ENCODE measurements at regions of chr6 and their contacts with region 1.

Region 1: GRCh38 chr6:24991810-24992467 is 56.2 kb upstream of the RIPOR2 start:
- DNase-seq: peak; percentile 52 to 90 (median 71)
- ATAC-seq: peak; percentile 86
- H3K4me3 ChIP-seq: no peak overlapping the region
- H3K4me3 Mint-ChIP-seq: peak overlapping the region; percentile 46
- H3K27ac ChIP-seq: peak overlapping the region; percentile 31 to 66
- H3K27ac Mint-ChIP-seq: peak overlapping the region; percentile 84
- H3K4me1 ChIP-seq: peaks cover 36% of the 10 kb centered on the region
- H3K4me1 Mint-ChIP-seq: peaks cover 83% of the 10 kb centered on the region
- H3K27me3 ChIP-seq: no peaks in the 10 kb centered on the region
- H3K27me3 Mint-ChIP-seq: no peaks in the 10 kb centered on the region
- CTCF ChIP-seq: peak; percentile 85

Region 2: DNA sequence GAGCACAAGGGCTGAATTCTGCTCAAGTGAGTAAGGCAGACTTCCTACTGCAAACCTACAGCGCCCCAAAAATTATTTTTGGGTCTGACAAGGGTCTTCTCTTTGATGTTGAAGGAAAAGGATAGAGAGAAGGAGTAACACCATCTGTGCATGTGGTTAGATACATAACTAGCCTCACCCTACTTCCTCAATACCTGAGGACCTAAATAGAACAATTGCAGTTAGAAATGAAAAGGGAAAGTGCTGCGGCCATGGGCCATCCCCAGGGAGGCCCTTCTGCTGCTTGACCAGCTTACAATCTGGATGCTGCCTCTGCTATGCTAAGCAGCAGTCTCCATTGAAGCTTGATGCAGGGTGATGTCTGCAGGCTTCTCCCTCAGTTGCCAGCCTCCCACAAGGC is 130.0 kb before region 1 on chr6:
- CTCF ChIA-PET with region 1: interaction called, 67 read pairs
- POLR2A ChIA-PET with region 1: interaction called, 58 read pairs
- intact Hi-C with region 1: no loop called
- DNase-seq: no peak
- ATAC-seq: no peak
- H3K4me3 ChIP-seq: no peak overlapping the region
- H3K4me3 Mint-ChIP-seq: no peak overlapping the region
- H3K27ac ChIP-seq: peak overlapping the region; percentile 39 to 78
- H3K27ac Mint-ChIP-seq: peak overlapping the region; percentile 93
- H3K4me1 ChIP-seq: peaks cover 77% of the 10 kb centered on the region
- H3K4me1 Mint-ChIP-seq: peaks cover 98% of the 10 kb centered on the region
- H3K27me3 ChIP-seq: no peaks in the 10 kb centered on the region
- H3K27me3 Mint-ChIP-seq: no peaks in the 10 kb centered on the region
- CTCF ChIP-seq: no peak

Region 3: DNA sequence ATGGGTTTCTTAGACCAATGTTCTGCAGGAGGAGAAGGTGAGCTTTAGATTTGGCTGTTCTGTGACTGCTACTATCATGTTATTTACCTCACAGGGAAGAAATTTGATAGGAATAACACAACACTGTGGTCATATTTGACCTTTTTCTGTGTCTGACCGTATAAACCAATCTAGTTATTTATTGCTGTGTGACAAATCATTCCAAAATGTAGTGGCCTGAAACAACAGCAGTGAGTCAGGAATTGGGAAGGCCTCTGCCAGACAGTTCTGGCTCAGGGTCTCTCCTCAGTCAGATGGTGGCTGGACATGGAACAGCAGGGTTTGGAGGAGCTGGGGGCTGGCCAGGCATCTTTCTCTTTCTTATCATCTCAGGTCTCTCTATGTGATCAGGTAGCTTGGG is 89.2 kb before region 1 on chr6:
- CTCF ChIA-PET with region 1: interaction called, 33 read pairs
- POLR2A ChIA-PET with region 1: interaction called, 95 read pairs
- intact Hi-C with region 1: no loop called
- DNase-seq: no peak
- ATAC-seq: no peak
- H3K4me3 ChIP-seq: no peak overlapping the region
- H3K4me3 Mint-ChIP-seq: peak overlapping the region; percentile 36
- H3K27ac ChIP-seq: peak overlapping the region; percentile 31 to 39
- H3K27ac Mint-ChIP-seq: peak overlapping the region; percentile 97
- H3K4me1 ChIP-seq: peaks cover 70% of the 10 kb centered on the region
- H3K4me1 Mint-ChIP-seq: peaks cover 99% of the 10 kb centered on the region
- H3K27me3 ChIP-seq: no peaks in the 10 kb centered on the region
- H3K27me3 Mint-ChIP-seq: no peaks in the 10 kb centered on the region
- CTCF ChIP-seq: no peak

Region 4: GRCh38 chr6:24927985-24928745 is 63.8 kb before region 1 on chr6:
- CTCF ChIA-PET with region 1: interaction called, 180 read pairs
- POLR2A ChIA-PET with region 1: interaction called, 395 read pairs
- intact Hi-C with region 1: no loop called
- DNase-seq: peak in 1 of 14 experiments; percentile 50
- ATAC-seq: peak; percentile 24
- H3K4me3 ChIP-seq: peak overlapping the region; percentile 89
- H3K4me3 Mint-ChIP-seq: peak overlapping the region; percentile 97
- H3K27ac ChIP-seq: peak overlapping the region; percentile 55 to 89
- H3K27ac Mint-ChIP-seq: peak overlapping the region; percentile 97
- H3K4me1 ChIP-seq: peaks cover 49% of the 10 kb centered on the region
- H3K4me1 Mint-ChIP-seq: peaks cover 81% of the 10 kb centered on the region
- H3K27me3 ChIP-seq: no peaks in the 10 kb centered on the region
- H3K27me3 Mint-ChIP-seq: no peaks in the 10 kb centered on the region
- CTCF ChIP-seq: no peak

Region 5: DNA sequence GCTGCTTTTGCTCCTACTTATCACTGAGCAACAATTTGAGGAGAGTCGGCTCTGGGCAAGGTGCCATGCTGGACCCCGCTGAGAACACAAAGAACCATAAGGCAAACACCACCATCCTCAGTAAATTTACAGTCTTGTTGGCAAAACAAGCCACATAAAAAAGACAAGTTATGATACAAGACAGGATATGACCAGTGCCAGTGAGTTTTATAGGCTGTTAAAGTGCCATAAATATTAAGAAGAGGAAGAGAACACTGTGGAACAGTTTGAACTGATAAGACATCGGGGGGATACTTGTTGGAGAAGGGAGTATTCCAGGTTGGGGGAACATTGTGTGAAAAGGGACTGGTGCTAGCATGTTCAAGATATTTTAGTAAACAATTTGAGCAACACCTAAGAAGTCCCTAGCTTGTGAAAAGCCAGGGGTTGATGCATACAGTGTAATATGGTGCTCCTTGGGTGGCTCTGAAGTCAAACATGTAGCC is 30.9 kb before region 1 on chr6:
- CTCF ChIA-PET with region 1: interaction called, 24 read pairs
- POLR2A ChIA-PET with region 1: interaction called, 32 read pairs
- intact Hi-C with region 1: no loop called
- DNase-seq: peak in 6 of 14 experiments; percentile 11 to 63 (median 44)
- ATAC-seq: peak; percentile 81
- H3K4me3 ChIP-seq: no peak overlapping the region
- H3K4me3 Mint-ChIP-seq: peak overlapping the region; percentile 25
- H3K27ac ChIP-seq: peak overlapping the region; percentile 50 to 68
- H3K27ac Mint-ChIP-seq: peak overlapping the region; percentile 91
- H3K4me1 ChIP-seq: peaks cover 65% of the 10 kb centered on the region
- H3K4me1 Mint-ChIP-seq: peaks cover 96% of the 10 kb centered on the region
- H3K27me3 ChIP-seq: no peaks in the 10 kb centered on the region
- H3K27me3 Mint-ChIP-seq: no peaks in the 10 kb centered on the region
- CTCF ChIP-seq: no peak

Region 6: DNA sequence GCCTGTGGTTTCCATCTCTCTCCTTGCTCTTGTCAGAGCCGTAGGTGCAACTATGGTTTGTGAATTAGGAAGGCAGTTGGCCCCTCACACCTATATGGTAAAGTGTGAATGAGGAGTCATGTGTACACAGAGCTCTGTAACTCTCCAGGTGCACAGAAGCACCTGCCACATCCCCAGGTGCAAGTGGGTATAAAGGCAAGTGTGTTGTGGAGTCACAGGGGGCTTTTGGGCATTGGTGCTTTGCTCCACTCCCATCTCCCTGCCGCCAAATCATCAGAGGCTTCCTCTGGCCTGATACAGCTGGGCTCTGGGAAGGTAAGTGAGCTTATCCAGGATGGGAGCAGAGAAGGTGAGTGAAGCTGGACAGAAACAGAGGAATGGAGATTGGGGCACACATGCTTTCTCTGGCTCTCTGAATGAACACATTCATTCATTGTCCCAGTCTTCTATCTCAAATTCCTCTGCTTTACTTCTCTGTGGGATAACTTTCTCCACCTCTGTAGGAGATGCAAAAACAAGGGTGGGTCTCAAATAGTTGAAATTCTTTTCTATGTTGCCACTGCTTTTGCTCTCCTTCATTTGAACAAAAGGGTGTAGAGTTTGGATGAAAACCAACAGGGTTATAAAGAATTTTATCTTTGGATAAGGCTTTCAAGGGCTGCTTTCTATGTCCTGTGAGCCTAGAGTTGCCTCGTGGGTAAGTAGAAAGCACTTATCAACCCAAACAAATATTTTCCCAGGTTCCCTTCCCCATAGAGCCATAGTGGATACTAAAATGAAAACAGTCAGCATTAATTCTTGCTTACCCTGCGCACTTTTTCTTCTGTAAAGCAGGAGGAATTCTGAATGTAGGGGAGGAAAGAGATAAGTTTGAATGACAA is 11.2 kb before region 1 on chr6:
- CTCF ChIA-PET with region 1: interaction called, 45 read pairs
- POLR2A ChIA-PET with region 1: interaction called, 12 read pairs
- intact Hi-C with region 1: no loop called
- DNase-seq: peak in 1 of 14 experiments; percentile 25
- ATAC-seq: peak; percentile 43
- H3K4me3 ChIP-seq: no peak overlapping the region
- H3K4me3 Mint-ChIP-seq: peak overlapping the region; percentile 11
- H3K27ac ChIP-seq: no peak overlapping the region
- H3K27ac Mint-ChIP-seq: peak overlapping the region; percentile 3
- H3K4me1 ChIP-seq: peaks cover 31% of the 10 kb centered on the region
- H3K4me1 Mint-ChIP-seq: peaks cover 78% of the 10 kb centered on the region
- H3K27me3 ChIP-seq: no peaks in the 10 kb centered on the region
- H3K27me3 Mint-ChIP-seq: no peaks in the 10 kb centered on the region
- CTCF ChIP-seq: no peak

Region 7: DNA sequence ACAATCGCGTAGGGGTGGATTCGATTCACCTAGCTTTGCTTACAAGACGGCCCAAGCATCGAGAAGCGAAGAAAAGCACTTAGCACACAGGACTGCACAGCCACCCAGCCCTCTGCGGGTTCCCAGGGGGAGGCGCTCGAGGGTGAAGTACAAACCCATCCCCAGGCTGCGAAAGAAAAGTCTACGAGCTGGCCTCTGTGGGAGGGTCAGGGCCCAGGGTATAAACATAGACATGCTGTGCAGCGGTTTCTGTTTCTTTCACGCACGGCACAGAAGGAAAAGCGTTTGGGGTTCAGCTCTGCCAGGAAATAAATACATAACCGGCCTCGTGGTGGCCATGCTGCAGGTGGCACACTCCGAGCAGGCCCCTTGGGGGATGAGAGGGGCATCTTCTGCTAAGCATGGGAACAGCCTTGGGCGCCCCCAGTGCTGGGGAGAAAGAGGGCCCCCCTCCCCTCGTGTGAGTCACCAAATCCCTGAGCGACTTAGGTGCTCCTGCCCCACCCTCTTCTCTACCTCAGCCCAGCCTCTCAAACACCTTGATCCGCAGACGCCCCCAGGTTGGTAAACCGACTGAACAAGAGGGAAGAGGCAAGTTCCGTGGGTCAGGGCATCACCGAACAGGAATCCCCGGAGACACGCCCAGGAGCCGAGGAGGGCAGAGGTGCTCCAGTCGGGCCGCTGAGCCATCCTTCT is 35.4 kb after region 1 on chr6:
- CTCF ChIA-PET with region 1: interaction called, 14 read pairs
- POLR2A ChIA-PET with region 1: interaction called, 14 read pairs
- intact Hi-C with region 1: no loop called
- DNase-seq: peak; percentile 64 to 93 (median 76)
- ATAC-seq: peak; percentile 93
- H3K4me3 ChIP-seq: peak overlapping the region; percentile 47
- H3K4me3 Mint-ChIP-seq: peak overlapping the region; percentile 70
- H3K27ac ChIP-seq: peak overlapping the region; percentile 60 to 62
- H3K27ac Mint-ChIP-seq: peak overlapping the region; percentile 91
- H3K4me1 ChIP-seq: peaks cover 37% of the 10 kb centered on the region
- H3K4me1 Mint-ChIP-seq: peaks cover 59% of the 10 kb centered on the region
- H3K27me3 ChIP-seq: no peaks in the 10 kb centered on the region
- H3K27me3 Mint-ChIP-seq: no peaks in the 10 kb centered on the region
- CTCF ChIP-seq: peak; percentile 41